CD4-positive, alpha-beta memory T cell (primary cell): ENCODE measurements at regions of chr3 and their contacts with region 1.

Region 1: GRCh38 chr3:114299421-114299820 is 5.6 kb downstream of the TIGIT start:
- DNase-seq: peak in 2 of 5 donors; percentile 28
- H3K4me3 ChIP-seq: peak overlapping the region in 1 of 2 donors; percentile 9
- H3K4me3 Mint-ChIP-seq: peak overlapping the region; percentile 59 to 77 (median 68)
- H3K27ac ChIP-seq: peak overlapping the region; percentile 29
- H3K27ac Mint-ChIP-seq: peak overlapping the region in 6 of 7 donors; percentile 32 to 90 (median 76)
- H3K4me1 ChIP-seq: peaks cover 38% of the 10 kb centered on the region
- H3K4me1 Mint-ChIP-seq: peaks cover 31 to 56% (median 42%) of the 10 kb centered on the region in 4 donors
- H3K27me3 ChIP-seq: no peaks in the 10 kb centered on the region
- H3K27me3 Mint-ChIP-seq: no peaks in the 10 kb centered on the region

Region 2: GRCh38 chr3:113436809-113437208 is 862.6 kb before region 1 on chr3:
- CTCF ChIA-PET with region 1: no interaction called
- POLR2A ChIA-PET with region 1: no interaction called
- intact Hi-C with region 1: no loop called
- DNase-seq: no peak
- H3K4me3 ChIP-seq: no peak overlapping the region
- H3K4me3 Mint-ChIP-seq: no peak overlapping the region
- H3K27ac ChIP-seq: no peak overlapping the region
- H3K27ac Mint-ChIP-seq: no peak overlapping the region
- H3K4me1 ChIP-seq: no peaks in the 10 kb centered on the region
- H3K4me1 Mint-ChIP-seq: peaks cover 0 to under 1% (median 0%) of the 10 kb centered on the region in 4 donors
- H3K27me3 ChIP-seq: no peaks in the 10 kb centered on the region
- H3K27me3 Mint-ChIP-seq: no peaks in the 10 kb centered on the region

Region 3: DNA sequence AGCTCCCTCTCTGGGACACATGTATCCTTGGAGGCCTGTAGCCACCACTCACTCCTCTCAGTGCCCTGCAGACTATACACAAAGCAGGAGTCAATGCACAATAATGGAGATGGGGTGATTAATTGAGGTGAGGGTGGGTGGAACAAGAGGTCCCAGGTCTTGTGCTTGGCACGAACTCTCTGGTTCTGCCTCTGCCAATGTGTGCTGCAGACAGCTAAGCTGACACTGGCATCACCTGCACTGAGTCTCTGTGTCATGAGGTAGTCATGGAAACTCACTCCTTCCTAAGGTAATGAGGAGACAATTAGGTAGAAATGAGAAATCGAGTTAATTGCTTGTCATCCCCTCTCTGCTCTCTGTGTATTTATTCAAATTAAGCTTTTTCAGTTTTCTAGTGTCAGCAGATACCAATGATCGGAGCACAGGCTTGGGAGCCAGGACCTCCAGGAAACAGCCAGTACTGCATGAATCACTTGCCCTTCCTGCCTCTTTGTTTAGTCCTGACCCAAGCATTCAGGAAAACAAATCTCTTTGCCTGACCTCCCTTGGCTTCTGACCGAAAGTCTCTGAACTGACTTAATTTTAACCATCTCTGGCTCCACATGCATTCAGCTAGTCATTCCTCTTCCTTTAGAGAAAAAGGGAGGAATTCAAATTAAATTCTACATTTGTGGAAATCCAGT is 177.3 kb before region 1 on chr3:
- CTCF ChIA-PET with region 1: no interaction called
- POLR2A ChIA-PET with region 1: no interaction called
- intact Hi-C with region 1: no loop called
- DNase-seq: no peak
- H3K4me3 ChIP-seq: no peak overlapping the region
- H3K4me3 Mint-ChIP-seq: no peak overlapping the region
- H3K27ac ChIP-seq: no peak overlapping the region
- H3K27ac Mint-ChIP-seq: no peak overlapping the region
- H3K4me1 ChIP-seq: no peaks in the 10 kb centered on the region
- H3K4me1 Mint-ChIP-seq: no peaks in the 10 kb centered on the region
- H3K27me3 ChIP-seq: no peaks in the 10 kb centered on the region
- H3K27me3 Mint-ChIP-seq: no peaks in the 10 kb centered on the region

Region 4: DNA sequence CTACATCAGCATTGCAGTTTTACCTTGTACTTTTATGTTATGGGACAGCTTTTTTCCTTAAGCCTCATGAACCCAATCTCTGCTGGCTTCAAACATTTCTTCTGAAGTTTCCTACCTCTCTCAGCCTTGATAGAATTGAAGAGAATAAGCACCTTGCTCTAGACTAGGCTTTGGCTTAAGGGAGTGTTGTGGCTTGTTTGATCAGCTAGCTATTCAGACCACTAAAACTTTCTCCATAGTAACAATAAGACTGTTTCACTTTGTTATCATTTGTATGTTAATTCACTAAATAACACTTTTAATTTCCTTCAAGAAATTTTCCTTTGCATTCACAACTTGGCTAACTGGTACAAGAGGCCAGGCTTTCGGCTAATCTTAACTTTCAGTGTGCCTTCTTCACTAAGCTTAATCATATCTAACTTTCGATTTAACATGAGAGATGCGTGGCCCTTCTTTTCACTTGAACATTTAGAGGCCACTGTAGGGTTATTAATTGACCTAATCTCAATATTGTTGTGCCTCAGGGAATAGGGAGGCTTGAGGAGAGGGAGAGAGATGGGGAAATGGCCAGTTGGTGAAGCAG is 13.7 kb before region 1 on chr3:
- CTCF ChIA-PET with region 1: interaction called, 153 read pairs
- POLR2A ChIA-PET with region 1: interaction called, 168 read pairs
- intact Hi-C with region 1: no loop called
- DNase-seq: peak in 3 of 5 donors; percentile 29 to 43 (median 37)
- H3K4me3 ChIP-seq: peak overlapping the region in 1 of 2 donors; percentile 21
- H3K4me3 Mint-ChIP-seq: peak overlapping the region; percentile 21 to 88 (median 86)
- H3K27ac ChIP-seq: peak overlapping the region; percentile 50
- H3K27ac Mint-ChIP-seq: peak overlapping the region; percentile 90 to 96 (median 95)
- H3K4me1 ChIP-seq: peaks cover 25% of the 10 kb centered on the region
- H3K4me1 Mint-ChIP-seq: peaks cover 11 to 29% (median 24%) of the 10 kb centered on the region in 4 donors
- H3K27me3 ChIP-seq: no peaks in the 10 kb centered on the region
- H3K27me3 Mint-ChIP-seq: no peaks in the 10 kb centered on the region

Region 5: GRCh38 chr3:114319453-114319852 is 20.0 kb after region 1 on chr3:
- CTCF ChIA-PET with region 1: interaction called, 10 read pairs
- POLR2A ChIA-PET with region 1: interaction called, 5 read pairs
- intact Hi-C with region 1: no loop called
- DNase-seq: no peak
- H3K4me3 ChIP-seq: no peak overlapping the region
- H3K4me3 Mint-ChIP-seq: peak overlapping the region in 1 of 8 donors; percentile 60
- H3K27ac ChIP-seq: no peak overlapping the region
- H3K27ac Mint-ChIP-seq: peak overlapping the region in 2 of 7 donors; percentile 5 to 43
- H3K4me1 ChIP-seq: peaks cover 83% of the 10 kb centered on the region
- H3K4me1 Mint-ChIP-seq: peaks cover 26 to 67% (median 48%) of the 10 kb centered on the region in 4 donors
- H3K27me3 ChIP-seq: no peaks in the 10 kb centered on the region
- H3K27me3 Mint-ChIP-seq: no peaks in the 10 kb centered on the region